Head of caudate nucleus (tissue), 42 donors: ENCODE measurements at regions of chr7 and their contacts with region 1.

Region 1: DNA sequence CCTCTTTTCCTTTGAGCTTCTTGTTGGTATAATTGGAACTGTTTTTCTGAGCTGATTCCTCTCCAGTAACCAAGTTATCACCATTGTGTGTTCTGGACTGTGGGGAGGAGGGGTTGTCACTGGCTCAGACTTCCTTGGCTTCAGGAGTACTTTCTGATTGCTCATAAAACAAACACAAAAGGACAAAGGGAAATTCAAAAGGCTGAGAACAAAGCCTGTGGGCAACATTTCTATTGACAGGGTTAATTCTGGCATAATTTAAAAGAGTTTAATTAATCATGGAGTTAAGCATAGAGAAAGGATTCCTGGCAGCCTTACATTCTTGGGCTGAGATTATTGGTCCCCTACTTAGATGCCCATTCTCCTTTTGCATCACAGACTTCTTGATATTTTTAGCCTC is 222.9 kb upstream of the KMT2E start:
- DNase-seq: peak in 1 of 42 donors; percentile 29

Region 2: DNA sequence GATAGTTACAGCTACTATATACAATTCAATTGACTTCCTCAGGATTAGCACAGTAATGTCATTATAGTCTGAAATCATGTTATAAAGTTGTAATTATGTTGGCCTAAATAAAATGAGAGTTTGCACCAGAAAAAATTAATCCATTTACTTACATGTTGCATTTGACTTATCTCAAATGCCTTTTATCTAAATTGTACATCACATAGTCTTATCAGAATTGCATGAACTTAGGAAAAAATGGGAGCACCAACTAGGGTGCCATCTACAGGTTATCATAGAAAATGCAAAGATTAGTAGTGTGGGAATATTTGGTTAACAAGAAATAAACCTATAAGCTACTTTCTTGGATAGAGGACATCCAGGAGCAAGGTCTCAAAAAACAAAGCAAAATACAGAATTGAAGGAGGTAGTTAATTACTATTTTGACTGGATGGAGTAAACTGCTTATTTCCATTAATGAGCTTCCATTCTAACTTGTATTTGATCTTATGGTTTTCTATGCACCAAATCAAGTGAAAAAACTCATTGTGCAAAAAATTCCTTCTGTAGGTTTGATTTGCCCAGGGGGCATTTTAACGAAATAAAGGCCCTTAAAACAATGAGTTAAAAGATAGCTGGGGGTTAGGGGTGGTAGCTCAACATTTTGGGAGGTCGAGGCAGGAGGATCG is 523.2 kb before region 1 on chr7:
- intact Hi-C with region 1: loop called (anchors 5 kb)
- DNase-seq: peak in 1 of 42 donors; percentile 5

Region 3: GRCh38 chr7:104848138-104848990 is 57.3 kb after region 1 on chr7:
- intact Hi-C with region 1: loop called (anchors 10 kb)
- DNase-seq: peak in 39 of 42 donors; percentile 43 to 94 (median 78)